ENCODE measurements at regions of chr1 and their contacts with region 1.

Region 1: GRCh38 chr1:209443971-209444651 is 139.4 kb upstream of the CAMK1G start:
- DNase-seq: no peak

Region 2: GRCh38 chr1:209463441-209463840 is 19.3 kb after region 1 on chr1:
- intact Hi-C with region 1: loop called in 1 of 2 experiments (anchors 1 kb)
- DNase-seq: no peak

Measured in posterior vena cava (tissue), 2 donors.